ENCODE measurements at regions of chr20 and their contacts with region 1.

Region 1: GRCh38 chr20:51807720-51808250 is 5.5 kb upstream of the SALL4 start:
- DNase-seq: no peak
- ATAC-seq: no peak
- H3K4me3 ChIP-seq: no peak overlapping the region
- H3K27ac ChIP-seq: no peak overlapping the region
- H3K4me1 ChIP-seq: no peaks in the 10 kb centered on the region
- H3K27me3 ChIP-seq: no peaks in the 10 kb centered on the region
- CTCF ChIP-seq: no peak
- POLR2A ChIP-seq: no peak

Region 2: DNA sequence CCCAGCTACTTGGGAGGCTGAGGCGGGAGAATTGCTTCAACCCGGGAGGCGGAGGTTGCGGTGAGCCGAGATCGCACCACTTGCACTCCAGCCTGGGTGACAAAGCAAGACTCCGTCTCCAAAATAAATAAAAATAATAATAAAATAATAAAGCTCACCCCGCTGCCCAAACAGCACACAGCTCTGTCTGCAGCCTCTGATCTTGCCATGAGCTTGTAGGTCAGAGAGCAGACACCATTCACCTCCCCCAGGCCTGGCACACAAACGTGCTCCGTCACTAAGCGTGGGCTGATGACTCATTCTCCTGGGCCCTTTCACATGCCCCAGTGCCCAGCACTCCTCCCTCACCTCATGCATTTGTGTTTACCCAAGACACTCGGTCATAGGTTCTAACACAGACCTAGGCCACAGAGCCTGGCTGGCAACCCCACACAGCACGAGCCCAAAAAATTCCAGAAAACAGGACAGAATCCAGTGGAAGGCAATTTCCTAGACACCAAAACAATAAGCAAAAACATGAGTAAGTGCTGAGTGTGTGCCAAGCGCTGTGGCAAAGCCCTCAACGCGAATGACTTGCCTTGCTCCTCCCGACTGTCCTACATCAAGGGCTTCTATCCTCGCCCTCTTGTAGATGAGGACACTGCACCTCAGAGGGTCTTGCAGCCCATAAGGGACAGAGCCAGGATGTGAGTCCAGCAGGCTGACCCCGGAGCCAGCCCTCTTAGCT is 57.6 kb before region 1 on chr20:
- intact Hi-C with region 1: no loop called
- DNase-seq: peak; percentile 85 to 95 (median 94)
- ATAC-seq: peak; percentile 88 to 98 (median 96)
- H3K4me3 ChIP-seq: peak overlapping the region in 2 of 3 donors; percentile 7 to 44
- H3K27ac ChIP-seq: peak overlapping the region; percentile 84 to 92 (median 91)
- H3K4me1 ChIP-seq: peaks cover 0 to 23% (median 13%) of the 10 kb centered on the region in 4 donors
- H3K27me3 ChIP-seq: no peaks in the 10 kb centered on the region
- CTCF ChIP-seq: no peak
- POLR2A ChIP-seq: peak; percentile 58

Region 3: GRCh38 chr20:51938559-51939331 is 131.0 kb after region 1 on chr20:
- intact Hi-C with region 1: no loop called
- DNase-seq: no peak
- ATAC-seq: no peak
- H3K4me3 ChIP-seq: no peak overlapping the region
- H3K27ac ChIP-seq: no peak overlapping the region
- H3K4me1 ChIP-seq: no peaks in the 10 kb centered on the region
- H3K27me3 ChIP-seq: no peaks in the 10 kb centered on the region
- CTCF ChIP-seq: no peak
- POLR2A ChIP-seq: no peak

Region 4: DNA sequence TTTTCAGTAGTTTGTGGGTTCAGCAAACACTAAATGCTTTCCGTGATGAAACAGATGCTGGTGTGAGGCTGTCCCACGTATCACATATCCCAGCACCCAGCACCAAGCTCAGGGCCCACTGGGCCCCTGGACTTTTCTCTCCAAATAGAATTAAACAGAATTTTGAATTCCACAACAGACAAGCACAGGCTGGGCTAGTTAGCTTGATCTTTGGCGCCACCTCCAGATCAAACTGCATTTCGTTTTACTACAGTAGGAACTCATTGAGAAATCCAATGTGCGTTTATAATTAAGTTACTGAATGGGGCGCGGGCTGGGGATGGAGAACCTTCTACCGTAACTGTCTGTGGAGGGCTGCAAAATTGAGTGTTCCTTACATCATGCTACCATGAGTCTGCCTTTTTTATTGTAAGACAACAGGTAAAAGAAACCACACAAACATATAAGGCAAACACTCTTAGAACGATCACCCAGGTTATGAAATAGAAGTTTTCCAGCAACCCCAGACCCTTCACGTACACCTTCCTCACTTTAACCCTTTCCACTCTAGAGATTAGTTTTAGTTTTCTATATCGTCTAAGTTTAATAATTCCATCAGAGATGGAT is 275.9 kb after region 1 on chr20:
- intact Hi-C with region 1: loop called in 1 of 2 experiments (anchors 5 kb)
- DNase-seq: peak in 1 of 3 donors; percentile 27
- ATAC-seq: peak; percentile 43 to 72 (median 49)
- H3K4me3 ChIP-seq: no peak overlapping the region
- H3K27ac ChIP-seq: no peak overlapping the region
- H3K4me1 ChIP-seq: no peaks in the 10 kb centered on the region
- H3K27me3 ChIP-seq: no peaks in the 10 kb centered on the region
- CTCF ChIP-seq: peak; percentile 43 to 51 (median 45)
- POLR2A ChIP-seq: no peak